Aorta (tissue), 5 donors: ENCODE measurements at regions of chr11 and their contacts with region 1.

Region 1: GRCh38 chr11:65117216-65118096 is at the start of gene ZNHIT2:
- DNase-seq: peak; percentile 100
- ATAC-seq: peak; percentile 93
- H3K4me3 ChIP-seq: peak within 1 kb of the TSS; percentile 70 to 80
- H3K27ac ChIP-seq: peak within 1 kb of the TSS in 1 of 2 donors; percentile 71
- H3K4me1 ChIP-seq: no peaks in the 10 kb centered on the region
- H3K27me3 ChIP-seq: no peaks in the 10 kb centered on the region
- total RNA-seq, gene ZNHIT2: 4.1 to 7.5 TPM

Region 2: DNA sequence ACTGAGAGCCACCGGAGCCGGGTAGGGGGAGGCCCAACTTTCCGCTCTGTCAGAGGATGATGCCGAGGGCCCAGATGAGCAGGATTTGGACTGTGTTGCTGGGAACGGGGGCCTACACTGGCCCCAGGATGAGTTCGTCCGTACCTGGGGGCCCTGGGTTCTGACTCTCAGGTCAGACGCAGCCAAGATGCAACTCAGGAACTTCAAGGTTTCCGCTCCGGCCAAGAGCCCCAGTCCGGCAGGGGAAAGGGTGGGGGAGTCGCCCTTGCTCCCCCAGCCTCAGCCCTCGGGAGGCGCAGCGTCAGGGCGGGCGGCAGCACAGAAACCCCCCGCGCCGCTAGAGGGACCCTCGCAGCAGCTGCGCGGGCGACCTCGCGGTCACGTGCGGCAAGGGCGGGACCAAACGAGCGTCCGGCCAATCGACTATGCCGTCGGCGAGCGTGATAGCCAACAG is 103.7 kb before region 1 on chr11:
- intact Hi-C with region 1: loop called (anchors 2 to 5 kb)
- DNase-seq: peak; percentile 95 to 96
- ATAC-seq: peak; percentile 95
- H3K4me3 ChIP-seq: peak overlapping the region; percentile 62 to 88
- H3K27ac ChIP-seq: peak overlapping the region; percentile 94 to 97
- H3K4me1 ChIP-seq: no peaks in the 10 kb centered on the region
- H3K27me3 ChIP-seq: no peaks in the 10 kb centered on the region

Region 3: GRCh38 chr11:65083834-65084597 is 33.4 kb before region 1 on chr11 and contains the starts of genes CDCA5 and ZFPL1:
- intact Hi-C with region 1: loop called in 1 of 2 experiments (anchors 5 kb)
- DNase-seq: peak; percentile 97 to 98
- ATAC-seq: peak; percentile 98
- H3K4me3 ChIP-seq: peak within 1 kb of the TSS; percentile 79 to 83
- H3K27ac ChIP-seq: peak within 1 kb of the TSS; percentile 17 to 35
- H3K4me1 ChIP-seq: no peaks in the 10 kb centered on the region
- H3K27me3 ChIP-seq: no peaks in the 10 kb centered on the region
- total RNA-seq, gene CDCA5: 0.81 to 1.0 TPM
- total RNA-seq, gene ZFPL1: 31.5 to 35.0 TPM

Region 4: GRCh38 chr11:65180877-65181568 is 63.6 kb after region 1 on chr11:
- intact Hi-C with region 1: loop called in 1 of 2 experiments (anchors 2 kb)
- DNase-seq: peak; percentile 70 to 88
- ATAC-seq: peak; percentile 70
- H3K4me3 ChIP-seq: peak overlapping the region; percentile 81 to 92
- H3K27ac ChIP-seq: no peak overlapping the region
- H3K4me1 ChIP-seq: no peaks in the 10 kb centered on the region
- H3K27me3 ChIP-seq: no peaks in the 10 kb centered on the region

Region 5: GRCh38 chr11:65290448-65291165 is 173.2 kb after region 1 on chr11:
- intact Hi-C with region 1: no loop called
- DNase-seq: peak; percentile 90 to 94
- ATAC-seq: peak; percentile 93
- H3K4me3 ChIP-seq: no peak overlapping the region
- H3K27ac ChIP-seq: no peak overlapping the region
- H3K4me1 ChIP-seq: no peaks in the 10 kb centered on the region
- H3K27me3 ChIP-seq: no peaks in the 10 kb centered on the region